ENCODE measurements at regions of chr3 and their contacts with region 1.

Region 1: DNA sequence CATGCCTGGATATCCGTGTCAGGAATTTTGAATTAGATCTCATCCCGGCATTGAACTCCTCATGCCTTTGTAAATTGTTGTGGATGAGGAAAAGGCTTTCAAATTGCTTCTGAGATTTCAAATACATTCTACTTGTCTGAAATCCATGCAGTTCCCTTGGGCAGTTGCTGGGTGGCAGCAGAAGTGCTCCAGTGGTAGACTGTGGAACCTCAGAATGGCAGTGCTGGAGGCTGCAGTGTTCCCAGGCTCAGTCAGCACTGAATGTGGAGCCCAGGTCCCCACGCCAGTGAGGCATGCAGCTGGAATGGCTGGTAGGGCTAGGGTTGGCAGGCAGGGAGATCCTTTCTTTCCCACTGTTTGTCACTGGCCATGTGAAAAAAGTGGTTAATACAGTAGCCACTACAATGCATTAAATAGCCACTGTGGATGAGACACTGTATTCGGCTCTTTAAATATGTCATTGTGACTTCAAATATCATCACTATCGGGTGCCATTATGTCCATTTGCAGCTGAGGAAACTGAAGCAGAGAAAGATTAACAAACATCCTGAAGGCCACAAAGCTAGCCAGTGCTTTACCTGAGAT is 98.6 kb downstream of the TPRG1 start:
- DNase-seq: peak; percentile 88
- H3K4me3 Mint-ChIP-seq: no peak overlapping the region
- H3K27ac Mint-ChIP-seq: peak overlapping the region; percentile 87
- H3K4me1 Mint-ChIP-seq: peaks cover 56% of the 10 kb centered on the region
- H3K27me3 Mint-ChIP-seq: no peaks in the 10 kb centered on the region
- CTCF ChIP-seq: peak; percentile 85

Region 2: GRCh38 chr3:189316242-189317019 is 46.1 kb after region 1 on chr3:
- CTCF ChIA-PET with region 1: interaction called, 4 read pairs
- POLR2A ChIA-PET with region 1: interaction called, 495 read pairs
- intact Hi-C with region 1: no loop called
- DNase-seq: no peak
- H3K4me3 Mint-ChIP-seq: no peak overlapping the region
- H3K27ac Mint-ChIP-seq: peak overlapping the region; percentile 81
- H3K4me1 Mint-ChIP-seq: peaks cover 32% of the 10 kb centered on the region
- H3K27me3 Mint-ChIP-seq: no peaks in the 10 kb centered on the region
- CTCF ChIP-seq: no peak

Region 3: GRCh38 chr3:189458532-189458931 is 188.2 kb after region 1 on chr3:
- CTCF ChIA-PET with region 1: interaction called, 3 read pairs
- POLR2A ChIA-PET with region 1: interaction called, 15 read pairs
- intact Hi-C with region 1: no loop called
- DNase-seq: peak; percentile 80
- H3K4me3 Mint-ChIP-seq: peak overlapping the region; percentile 26
- H3K27ac Mint-ChIP-seq: peak overlapping the region; percentile 70
- H3K4me1 Mint-ChIP-seq: peaks cover 29% of the 10 kb centered on the region
- H3K27me3 Mint-ChIP-seq: no peaks in the 10 kb centered on the region
- CTCF ChIP-seq: no peak

Region 4: GRCh38 chr3:189588070-189588820 is 317.9 kb after region 1 on chr3:
- CTCF ChIA-PET with region 1: interaction called, 9 read pairs
- POLR2A ChIA-PET with region 1: interaction called, 90 read pairs
- intact Hi-C with region 1: loop called (anchors 1 kb)
- DNase-seq: peak; percentile 92
- H3K4me3 Mint-ChIP-seq: peak overlapping the region; percentile 60
- H3K27ac Mint-ChIP-seq: peak overlapping the region; percentile 84
- H3K4me1 Mint-ChIP-seq: peaks cover 48% of the 10 kb centered on the region
- H3K27me3 Mint-ChIP-seq: no peaks in the 10 kb centered on the region
- CTCF ChIP-seq: no peak

Region 5: DNA sequence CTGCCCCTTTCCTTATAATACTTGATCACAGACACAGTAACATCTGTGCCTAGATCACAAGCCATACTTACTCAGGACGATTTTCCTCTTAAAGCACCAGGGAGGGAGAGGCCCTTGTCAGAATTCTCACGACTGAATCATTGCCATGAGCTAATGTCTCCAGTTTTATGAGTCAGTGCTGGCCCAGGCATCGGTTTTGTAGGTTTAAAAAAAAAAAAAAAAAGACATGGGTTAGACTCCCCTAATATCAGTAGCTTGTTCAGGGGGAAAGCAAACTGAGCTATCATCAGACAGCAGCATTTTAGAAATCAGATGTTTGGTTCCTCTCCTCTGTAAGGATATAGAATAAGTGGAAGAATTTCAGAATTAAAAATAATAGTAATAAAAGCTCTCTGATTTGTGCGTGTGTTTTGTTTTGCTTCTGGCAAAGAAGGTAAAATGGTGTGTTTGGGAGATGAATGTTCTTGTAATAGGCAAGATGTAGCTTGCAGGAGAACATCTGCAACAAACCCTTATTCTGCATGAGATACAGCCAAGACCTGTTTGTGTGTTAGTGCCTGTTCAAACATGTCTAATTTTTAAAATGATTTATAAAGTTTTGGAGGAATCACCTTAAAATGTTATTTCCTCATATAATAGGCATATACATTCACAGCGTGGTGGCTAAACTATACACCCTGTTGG is 554.4 kb after region 1 on chr3:
- CTCF ChIA-PET with region 1: interaction called, 6 read pairs
- POLR2A ChIA-PET with region 1: interaction called, 37 read pairs
- intact Hi-C with region 1: no loop called
- DNase-seq: peak; percentile 96
- H3K4me3 Mint-ChIP-seq: peak overlapping the region; percentile 42
- H3K27ac Mint-ChIP-seq: peak overlapping the region; percentile 83
- H3K4me1 Mint-ChIP-seq: peaks cover 31% of the 10 kb centered on the region
- H3K27me3 Mint-ChIP-seq: no peaks in the 10 kb centered on the region
- CTCF ChIP-seq: no peak

Region 6: DNA sequence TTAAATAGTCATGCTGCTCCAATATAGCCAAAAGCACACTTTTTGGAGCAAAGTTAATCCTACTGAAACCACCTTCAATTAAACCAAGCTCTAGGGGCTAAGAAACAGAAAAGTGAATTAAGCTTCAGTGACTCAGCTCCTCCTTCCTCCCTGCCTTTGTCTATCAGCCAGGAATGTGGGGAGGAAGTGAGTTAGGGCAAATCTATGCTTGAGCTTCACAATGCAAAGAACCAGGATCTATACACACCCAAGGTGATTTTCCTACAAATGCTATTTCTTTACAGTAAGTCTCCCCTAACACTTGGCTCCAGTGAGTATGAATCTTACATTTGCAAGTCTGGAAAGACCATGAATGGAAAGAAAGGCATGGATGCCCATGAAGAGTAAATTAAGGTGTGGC is 638.3 kb after region 1 on chr3:
- CTCF ChIA-PET with region 1: interaction called, 3 read pairs
- POLR2A ChIA-PET with region 1: interaction called, 13 read pairs
- intact Hi-C with region 1: no loop called
- DNase-seq: peak; percentile 86
- H3K4me3 Mint-ChIP-seq: no peak overlapping the region
- H3K27ac Mint-ChIP-seq: peak overlapping the region; percentile 80
- H3K4me1 Mint-ChIP-seq: peaks cover 33% of the 10 kb centered on the region
- H3K27me3 Mint-ChIP-seq: no peaks in the 10 kb centered on the region
- CTCF ChIP-seq: no peak

Measured in MCF 10A (cell line).